Panc1 (cell line): ENCODE measurements at regions of chr7 and their contacts with region 1.

Region 1: DNA sequence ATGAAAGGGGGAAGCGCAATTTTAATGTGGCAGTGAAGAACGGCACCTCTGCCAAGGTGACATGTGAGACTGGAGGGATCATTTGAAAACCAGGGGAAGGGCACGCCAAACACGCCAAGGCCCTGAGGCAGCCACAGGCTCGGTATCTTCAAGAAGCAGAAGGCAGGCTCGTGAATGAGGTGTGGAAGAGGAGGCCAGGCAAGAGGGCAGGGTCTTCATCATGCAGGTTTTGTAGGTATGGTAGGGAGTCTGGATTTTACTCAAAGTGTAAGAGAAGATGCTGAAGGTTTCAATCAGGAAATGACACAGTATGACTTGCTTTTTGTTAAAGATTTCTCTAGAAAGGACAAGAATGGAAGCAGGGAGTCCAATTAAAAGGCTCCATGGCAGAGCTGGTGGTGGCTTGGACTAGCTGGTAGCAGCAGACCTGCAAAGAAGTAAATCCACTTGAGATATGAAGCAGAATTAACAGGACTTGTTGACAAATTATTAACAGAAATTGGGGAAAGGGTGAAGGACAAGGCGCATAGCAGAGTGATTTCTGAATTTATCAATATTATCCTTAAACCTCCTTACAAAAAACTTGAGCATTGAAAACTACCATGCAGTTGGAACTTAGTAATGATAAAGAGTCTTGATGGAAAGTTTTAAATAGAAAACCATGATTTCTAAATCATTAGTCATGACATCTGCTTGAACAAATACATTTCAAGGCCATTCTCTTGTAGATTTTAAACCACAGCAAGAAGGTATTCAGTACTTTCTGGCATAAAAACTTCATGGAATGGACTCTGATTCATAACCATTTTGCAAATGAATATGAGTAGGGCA is 70.4 kb downstream of the COA1 start:
- DNase-seq: no peak
- ATAC-seq: 0 out of 2 replicates have a peak, but pooled peaks have one; percentile 31
- H3K4me3 ChIP-seq: no peak overlapping the region
- H3K27ac ChIP-seq: no peak overlapping the region
- H3K4me1 ChIP-seq: peaks cover 10% of the 10 kb centered on the region
- H3K27me3 ChIP-seq: no peaks in the 10 kb centered on the region
- CTCF ChIP-seq: no peak

Region 2: GRCh38 chr7:43637114-43637806 is 21.7 kb before region 1 on chr7:
- CTCF ChIA-PET with region 1: interaction called, 12 read pairs
- POLR2A ChIA-PET with region 1: no interaction called
- in situ Hi-C with region 1: no loop called
- intact Hi-C with region 1: no loop called
- DNase-seq: no peak
- ATAC-seq: no peak
- H3K4me3 ChIP-seq: no peak overlapping the region
- H3K27ac ChIP-seq: no peak overlapping the region
- H3K4me1 ChIP-seq: peaks cover 7% of the 10 kb centered on the region; the same call in 1 of the 2 replicates
- H3K27me3 ChIP-seq: no peaks in the 10 kb centered on the region
- CTCF ChIP-seq: no peak

Region 3: GRCh38 chr7:44283344-44284211 is 624.6 kb after region 1 on chr7:
- CTCF ChIA-PET with region 1: no interaction called
- POLR2A ChIA-PET with region 1: interaction called, 14 read pairs
- in situ Hi-C with region 1: no loop called
- intact Hi-C with region 1: no loop called
- DNase-seq: no peak
- ATAC-seq: no peak
- H3K4me3 ChIP-seq: no peak overlapping the region
- H3K27ac ChIP-seq: no peak overlapping the region
- H3K4me1 ChIP-seq: no peaks in the 10 kb centered on the region
- H3K27me3 ChIP-seq: no peaks in the 10 kb centered on the region
- CTCF ChIP-seq: no peak